ENCODE measurements at regions of chr18 and their contacts with region 1.

Region 1: DNA sequence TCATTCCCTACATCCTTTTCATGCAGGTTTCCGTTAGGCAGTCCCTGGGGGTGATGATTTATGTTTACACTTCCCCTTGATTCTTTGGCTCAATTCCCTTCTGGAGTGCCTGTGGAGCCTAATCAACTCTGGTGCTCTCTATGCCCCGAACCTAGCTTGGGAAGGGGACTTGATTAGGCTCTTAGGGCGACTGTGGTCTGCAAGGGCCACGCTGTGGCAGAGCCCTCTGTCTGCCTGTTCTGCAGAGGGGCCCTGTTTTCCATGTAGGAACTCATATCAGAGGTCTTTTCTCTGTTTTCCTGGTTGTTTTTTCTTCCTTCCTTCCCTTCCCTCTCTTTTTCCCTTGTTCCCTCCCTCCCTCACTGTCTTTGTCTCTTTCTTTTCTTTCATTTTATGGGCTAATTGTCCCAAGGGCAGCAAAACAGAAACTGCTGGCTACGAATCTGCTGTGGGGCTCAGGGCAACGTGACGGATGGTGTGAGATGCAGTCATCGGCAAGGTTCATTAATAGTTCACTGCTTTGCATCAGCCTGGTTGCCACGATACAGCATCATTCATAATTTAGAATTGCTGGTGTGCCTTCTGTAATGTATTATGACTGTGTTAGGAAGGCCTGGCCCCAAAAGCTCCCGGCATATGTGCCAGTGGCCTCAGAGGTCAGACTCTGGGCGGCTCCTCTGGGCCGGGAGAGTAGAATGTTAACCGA is 134.5 kb downstream of the NAPG start:
- DNase-seq: no peak
- H3K4me3 ChIP-seq: no peak overlapping the region
- H3K4me1 ChIP-seq: no peaks in the 10 kb centered on the region
- H3K27me3 ChIP-seq: no peaks in the 10 kb centered on the region

Region 2: GRCh38 chr18:10560450-10561045 is 99.8 kb before region 1 on chr18:
- in situ Hi-C with region 1: loop called (anchors 25 kb)
- DNase-seq: peak; percentile 47 to 85
- H3K4me3 ChIP-seq: no peak overlapping the region
- H3K4me1 ChIP-seq: no peaks in the 10 kb centered on the region
- H3K27me3 ChIP-seq: no peaks in the 10 kb centered on the region

Region 3: GRCh38 chr18:10928772-10929373 is 268.5 kb after region 1 on chr18:
- in situ Hi-C with region 1: loop called (anchors 25 kb)
- DNase-seq: no peak
- H3K4me3 ChIP-seq: no peak overlapping the region
- H3K4me1 ChIP-seq: no peaks in the 10 kb centered on the region
- H3K27me3 ChIP-seq: no peaks in the 10 kb centered on the region

Measured in HAP-1 (cell line).